PC-3 (cell line): ENCODE measurements at regions of chr9 and their contacts with region 1.

Region 1: GRCh38 chr9:88106491-88106890 is 31.8 kb downstream of the SPATA31C2 start:
- DNase-seq: peak; percentile 49
- ATAC-seq: peak; percentile 64
- H3K4me3 ChIP-seq: no peak overlapping the region
- H3K27ac ChIP-seq: no peak overlapping the region
- H3K4me1 ChIP-seq: no peaks in the 10 kb centered on the region
- H3K27me3 ChIP-seq: no peaks in the 10 kb centered on the region
- CTCF ChIP-seq: peak; percentile 63

Region 2: GRCh38 chr9:88076286-88077090 is 30.0 kb before region 1 on chr9:
- CTCF ChIA-PET with region 1: interaction called, 10 read pairs
- POLR2A ChIA-PET with region 1: no interaction called
- intact Hi-C with region 1: no loop called
- DNase-seq: peak; percentile 81
- ATAC-seq: peak; percentile 84
- H3K4me3 ChIP-seq: peak overlapping the region; percentile 73
- H3K27ac ChIP-seq: peak overlapping the region; percentile 70
- H3K4me1 ChIP-seq: peaks cover 23% of the 10 kb centered on the region; the same call in 1 of the 2 replicates
- H3K27me3 ChIP-seq: no peaks in the 10 kb centered on the region
- CTCF ChIP-seq: no peak

Region 3: DNA sequence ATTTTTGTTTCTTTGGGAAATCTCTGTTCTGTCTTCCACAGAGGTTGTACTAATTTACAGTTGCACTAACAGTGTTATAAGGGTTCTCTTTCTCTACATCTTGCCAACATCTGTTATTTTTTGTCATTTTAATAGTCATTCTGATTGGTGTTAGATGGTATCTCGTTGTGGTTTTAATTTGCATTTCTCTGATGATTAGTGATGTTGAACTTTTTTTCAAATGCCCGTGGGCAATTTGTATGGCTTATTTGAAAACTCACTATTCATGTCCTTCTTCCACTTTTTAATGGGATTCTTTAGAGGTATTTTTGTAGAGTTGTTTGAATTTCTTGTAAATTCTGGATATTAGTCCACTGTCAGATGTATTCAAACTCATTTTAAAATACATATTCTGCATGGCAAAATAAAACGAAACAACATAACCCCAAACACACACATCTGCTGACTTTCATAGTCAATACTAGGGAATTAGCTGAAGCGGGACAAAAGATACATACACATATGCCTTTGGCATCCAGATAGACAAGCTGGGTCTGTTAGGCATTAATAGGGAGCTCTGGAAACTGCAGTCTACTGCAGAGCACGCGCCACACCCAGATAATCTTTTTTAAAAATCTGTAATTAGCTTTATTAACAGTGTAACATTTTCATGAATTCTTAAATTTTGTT is 37.6 kb after region 1 on chr9:
- CTCF ChIA-PET with region 1: no interaction called
- POLR2A ChIA-PET with region 1: no interaction called
- intact Hi-C with region 1: no loop called
- DNase-seq: no peak
- ATAC-seq: no peak
- H3K4me3 ChIP-seq: no peak overlapping the region
- H3K27ac ChIP-seq: no peak overlapping the region
- H3K4me1 ChIP-seq: no peaks in the 10 kb centered on the region
- H3K27me3 ChIP-seq: peaks cover 63% of the 10 kb centered on the region
- CTCF ChIP-seq: no peak

Region 4: GRCh38 chr9:88476491-88477271 is 370.2 kb after region 1 on chr9:
- CTCF ChIA-PET with region 1: no interaction called
- POLR2A ChIA-PET with region 1: no interaction called
- intact Hi-C with region 1: loop called (anchors 5 kb)
- DNase-seq: peak; percentile 6
- ATAC-seq: no peak; the same call in 1 of the 2 replicates
- H3K4me3 ChIP-seq: peak overlapping the region; percentile 27; the same call in 1 of the 2 replicates
- H3K27ac ChIP-seq: peak overlapping the region; percentile 95
- H3K4me1 ChIP-seq: peaks cover 52% of the 10 kb centered on the region
- H3K27me3 ChIP-seq: no peaks in the 10 kb centered on the region
- CTCF ChIP-seq: no peak